AG04449 (cell line): ENCODE measurements at regions of chr22 and their contacts with region 1.

Region 1: DNA sequence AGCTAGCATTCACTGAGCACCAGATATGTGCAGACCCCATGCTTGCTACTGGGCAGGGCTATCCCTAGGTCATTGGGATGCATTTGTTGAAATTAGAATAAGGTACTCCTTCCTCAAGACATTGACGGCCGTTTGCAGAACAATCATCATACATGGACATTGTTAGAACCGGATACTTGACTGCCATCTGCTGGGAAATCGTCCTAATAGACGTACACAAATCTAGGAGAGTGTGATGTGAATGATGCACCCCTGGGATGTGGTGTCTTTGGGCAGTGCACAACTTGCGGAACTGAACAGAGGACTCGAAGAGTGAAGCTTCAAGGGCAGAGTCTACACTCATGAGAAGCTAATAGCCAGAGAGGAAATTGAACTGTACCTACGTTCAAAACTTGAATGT is 35.9 kb downstream of the MYO18B start:
- DNase-seq: no peak
- H3K4me3 ChIP-seq: no peak overlapping the region
- CTCF ChIP-seq: peak; percentile 43

Region 2: DNA sequence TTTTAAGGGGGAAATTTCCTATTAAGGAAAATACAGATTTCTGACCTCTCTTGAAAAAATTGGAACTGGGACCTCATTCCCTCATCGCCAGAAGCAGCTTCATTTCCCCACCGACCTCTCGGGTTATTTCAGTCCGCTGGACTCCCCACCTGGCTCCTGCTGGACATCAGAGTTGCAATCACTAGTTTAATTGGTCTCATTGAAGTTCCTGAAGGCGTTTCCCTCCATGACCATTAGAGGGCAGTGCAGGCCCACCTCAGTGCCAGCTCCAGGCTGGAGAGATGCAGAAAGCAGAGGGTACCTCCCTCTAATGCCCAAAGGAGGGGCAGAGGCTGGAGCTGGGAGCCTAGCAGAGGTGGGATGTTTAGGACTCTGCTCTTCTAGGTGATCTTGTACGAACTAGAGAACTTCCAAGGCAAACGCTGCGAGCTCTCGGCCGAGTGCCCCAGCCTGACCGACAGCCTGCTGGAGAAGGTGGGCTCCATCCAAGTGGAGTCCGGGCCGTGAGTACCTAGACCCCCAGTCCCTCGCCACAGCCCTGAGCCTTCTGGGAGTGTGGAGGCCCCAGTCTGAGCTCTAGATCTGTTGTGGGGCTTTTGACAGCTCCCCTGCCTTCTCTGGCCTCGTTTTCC is 575.5 kb before region 1 on chr22:
- CTCF ChIA-PET with region 1: interaction called, 30 read pairs
- POLR2A ChIA-PET with region 1: no interaction called
- DNase-seq: peak; percentile 2
- H3K4me3 ChIP-seq: no peak overlapping the region
- CTCF ChIP-seq: peak; percentile 85

Region 3: GRCh38 chr22:25461301-25461700 is 316.6 kb before region 1 on chr22:
- CTCF ChIA-PET with region 1: interaction called, 166 read pairs
- POLR2A ChIA-PET with region 1: no interaction called
- DNase-seq: no peak
- H3K4me3 ChIP-seq: no peak overlapping the region
- CTCF ChIP-seq: no peak

Region 4: DNA sequence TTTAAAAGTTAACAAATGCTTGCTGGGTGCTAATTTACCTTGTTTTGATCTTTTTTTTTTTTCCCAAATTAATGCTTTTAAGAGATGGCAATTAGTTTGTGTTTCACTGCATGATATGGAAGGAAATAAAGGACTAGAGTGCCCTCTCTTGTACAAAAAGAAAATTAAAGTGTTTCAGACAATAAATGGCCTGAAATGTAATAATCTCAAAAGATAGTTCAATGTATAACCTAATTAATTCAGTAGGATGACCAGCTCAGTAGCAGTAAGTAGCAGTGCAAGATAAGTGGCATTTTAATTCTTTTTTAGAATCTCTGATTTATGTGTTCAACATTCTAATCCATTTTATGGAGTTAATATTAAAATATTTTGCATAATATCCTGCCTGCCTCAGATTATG is 75.8 kb before region 1 on chr22:
- CTCF ChIA-PET with region 1: interaction called, 24 read pairs
- POLR2A ChIA-PET with region 1: no interaction called
- DNase-seq: no peak
- H3K4me3 ChIP-seq: no peak overlapping the region
- CTCF ChIP-seq: peak; percentile 10

Region 5: DNA sequence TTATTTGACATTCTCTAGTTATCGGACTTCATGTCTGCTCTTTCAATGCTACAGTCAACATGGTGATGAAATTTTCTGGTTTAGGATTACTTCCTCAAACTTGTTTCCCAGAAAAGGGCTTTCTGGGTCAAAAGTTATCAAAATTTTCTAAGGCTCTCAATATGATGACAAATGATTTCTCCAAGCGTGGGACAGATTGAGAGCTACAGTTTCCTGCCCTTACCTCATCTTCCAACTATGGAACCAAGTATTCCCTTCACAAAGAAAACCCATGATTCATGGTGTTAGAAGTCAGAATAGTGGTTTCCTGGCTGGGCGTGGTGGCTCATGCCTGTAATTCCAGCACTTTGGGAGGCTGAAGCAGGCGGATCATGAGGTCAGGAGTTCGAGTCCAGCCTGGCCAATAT is 18.0 kb before region 1 on chr22:
- CTCF ChIA-PET with region 1: interaction called, 76 read pairs
- POLR2A ChIA-PET with region 1: no interaction called
- DNase-seq: peak; percentile 90
- H3K4me3 ChIP-seq: no peak overlapping the region
- CTCF ChIP-seq: no peak

Region 6: DNA sequence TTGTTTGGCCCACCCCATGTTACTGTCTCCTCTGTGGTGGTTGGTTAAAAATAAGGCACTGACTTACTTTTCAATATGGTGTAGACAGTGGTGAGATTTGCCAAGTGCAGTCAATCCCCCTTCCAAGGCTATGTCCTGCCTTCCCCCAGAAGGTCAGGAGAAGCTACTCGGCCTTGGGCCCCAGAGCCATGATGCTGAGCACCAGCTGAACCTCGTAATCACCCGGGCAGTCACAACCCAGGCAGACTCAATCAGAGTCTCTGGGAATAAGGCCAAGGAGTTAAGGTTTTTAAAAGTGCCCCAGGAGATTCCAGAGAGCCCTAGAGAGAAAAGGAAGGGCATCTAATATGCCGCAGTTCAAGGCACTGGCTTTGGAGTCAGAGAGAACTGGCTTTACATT is 12.1 kb before region 1 on chr22:
- CTCF ChIA-PET with region 1: interaction called, 76 read pairs
- POLR2A ChIA-PET with region 1: no interaction called
- DNase-seq: no peak
- H3K4me3 ChIP-seq: no peak overlapping the region
- CTCF ChIP-seq: no peak

Region 7: DNA sequence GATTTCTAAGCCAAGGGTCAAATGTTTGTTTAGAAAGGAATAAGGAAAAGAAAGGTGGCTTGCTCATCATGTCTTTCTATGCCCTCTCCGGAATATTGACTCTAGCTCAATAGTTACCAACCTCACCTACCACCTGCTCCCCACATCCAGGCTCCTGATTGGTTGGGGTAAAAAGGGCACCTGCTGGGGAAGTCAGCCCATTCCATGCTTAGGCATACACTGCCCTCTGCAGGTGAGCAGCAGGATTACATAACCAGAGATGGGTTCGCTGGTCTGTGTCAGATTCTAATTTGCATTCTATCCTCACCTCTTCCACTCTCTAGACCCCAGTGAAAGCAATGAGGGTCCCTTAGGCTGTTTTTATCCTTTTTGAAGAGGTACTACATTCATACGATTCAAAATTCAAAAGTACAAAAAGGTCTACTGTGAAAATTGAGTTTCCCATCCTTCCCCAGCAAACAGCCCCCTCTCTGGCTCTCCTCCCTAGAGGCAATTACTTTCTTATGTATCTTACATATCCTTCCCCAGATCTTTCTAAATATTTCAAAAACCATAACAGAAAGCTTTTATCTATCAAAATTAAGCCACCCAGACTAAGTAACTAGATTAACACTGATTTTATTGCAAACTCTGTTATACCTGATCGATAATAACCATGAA is 553.2 kb after region 1 on chr22:
- CTCF ChIA-PET with region 1: interaction called, 36 read pairs
- POLR2A ChIA-PET with region 1: no interaction called
- DNase-seq: no peak
- H3K4me3 ChIP-seq: no peak overlapping the region
- CTCF ChIP-seq: peak; percentile 90